Aorta (tissue), 5 donors: ENCODE measurements at regions of chr3 and their contacts with region 1.

Region 1: GRCh38 chr3:152268555-152269425 is at the start of gene MBNL1:
- DNase-seq: peak; percentile 87 to 90
- ATAC-seq: peak; percentile 85
- H3K4me3 ChIP-seq: peak within 1 kb of the TSS; percentile 80 to 86
- H3K27ac ChIP-seq: peak within 1 kb of the TSS; percentile 69 to 89
- H3K4me1 ChIP-seq: peaks cover 1 to 5% of the 10 kb centered on the region in 2 donors
- H3K27me3 ChIP-seq: no peaks in the 10 kb centered on the region
- total RNA-seq, gene MBNL1: 485 to 689 TPM

Region 2: GRCh38 chr3:152071924-152072323 is 196.9 kb before region 1 on chr3:
- intact Hi-C with region 1: loop called (anchors 5 kb)
- DNase-seq: no peak
- ATAC-seq: peak; percentile 80
- H3K4me3 ChIP-seq: no peak overlapping the region
- H3K27ac ChIP-seq: no peak overlapping the region
- H3K4me1 ChIP-seq: no peaks in the 10 kb centered on the region
- H3K27me3 ChIP-seq: no peaks in the 10 kb centered on the region

Region 3: GRCh38 chr3:152205097-152205593 is 63.6 kb before region 1 on chr3:
- intact Hi-C with region 1: loop called (anchors 2 to 5 kb)
- DNase-seq: no peak
- ATAC-seq: peak; percentile 25
- H3K4me3 ChIP-seq: peak overlapping the region; percentile 80 to 93
- H3K27ac ChIP-seq: peak overlapping the region; percentile 96 to 99
- H3K4me1 ChIP-seq: peaks cover 4 to 6% of the 10 kb centered on the region in 2 donors
- H3K27me3 ChIP-seq: no peaks in the 10 kb centered on the region

Region 4: DNA sequence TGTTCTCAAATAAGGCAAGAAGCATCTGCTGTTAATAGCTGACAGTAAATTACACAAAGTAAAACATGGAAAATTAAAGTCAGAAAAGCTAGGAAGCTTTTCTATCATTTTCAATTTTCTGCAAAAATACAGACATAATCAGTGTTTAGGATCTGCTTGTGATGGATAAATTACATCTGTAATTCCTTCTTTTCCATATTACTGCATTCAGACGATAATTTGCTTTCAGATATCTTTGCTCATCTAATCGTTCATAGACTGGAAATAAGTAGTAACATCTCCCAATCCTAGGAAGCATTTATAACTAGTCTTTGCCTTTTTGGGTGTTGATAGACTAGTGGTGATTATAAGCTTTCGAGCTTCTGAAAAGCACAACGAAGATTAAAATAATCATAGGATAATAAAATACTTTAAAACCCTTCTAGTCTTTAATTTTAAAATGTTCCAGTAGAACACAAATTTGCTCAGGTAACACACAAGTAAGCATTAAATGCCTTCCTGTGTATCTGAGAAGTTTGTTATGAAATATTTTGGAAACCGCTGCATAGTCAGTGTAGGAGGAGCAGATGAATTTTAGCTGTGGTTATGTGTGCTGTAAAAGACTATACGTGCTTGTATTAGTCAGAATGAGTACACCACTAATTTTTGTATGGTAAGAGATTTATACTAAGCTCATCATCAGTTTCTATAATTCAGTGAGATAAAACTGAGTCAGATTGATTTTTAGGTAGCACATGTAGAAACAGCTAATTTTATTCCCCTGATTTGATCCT is 40.9 kb after region 1 on chr3:
- intact Hi-C with region 1: loop called in 1 of 2 experiments (anchors 5 kb)
- DNase-seq: no peak
- ATAC-seq: no peak
- H3K4me3 ChIP-seq: no peak overlapping the region
- H3K27ac ChIP-seq: peak overlapping the region in 1 of 2 donors; percentile 51
- H3K4me1 ChIP-seq: peaks cover 9 to 20% of the 10 kb centered on the region in 2 donors
- H3K27me3 ChIP-seq: no peaks in the 10 kb centered on the region

Region 5: GRCh38 chr3:152444029-152444641 is 175.3 kb after region 1 on chr3:
- intact Hi-C with region 1: loop called (anchors 5 to 10 kb)
- DNase-seq: no peak
- ATAC-seq: peak; percentile 83
- H3K4me3 ChIP-seq: no peak overlapping the region
- H3K27ac ChIP-seq: no peak overlapping the region
- H3K4me1 ChIP-seq: peaks cover 1 to 4% of the 10 kb centered on the region in 2 donors
- H3K27me3 ChIP-seq: no peaks in the 10 kb centered on the region